CD8-positive, alpha-beta T cell (primary cell): ENCODE measurements at regions of chr10 and their contacts with region 1.

Region 1: GRCh38 chr10:95601116-95601719 is 40.0 kb upstream of the SORBS1 start:
- DNase-seq: peak in 8 of 9 experiments; percentile 13 to 64 (median 33)
- ATAC-seq: no peak
- H3K4me3 ChIP-seq: no peak overlapping the region
- H3K4me3 Mint-ChIP-seq: no peak overlapping the region
- H3K27ac ChIP-seq: no peak overlapping the region
- H3K27ac Mint-ChIP-seq: no peak overlapping the region
- H3K4me1 ChIP-seq: no peaks in the 10 kb centered on the region
- H3K4me1 Mint-ChIP-seq: no peaks in the 10 kb centered on the region
- H3K27me3 ChIP-seq: no peaks in the 10 kb centered on the region
- H3K27me3 Mint-ChIP-seq: no peaks in the 10 kb centered on the region
- CTCF ChIP-seq: peak; percentile 50

Region 2: GRCh38 chr10:94630017-94630688 is 971.1 kb before region 1 on chr10:
- CTCF ChIA-PET with region 1: no interaction called
- POLR2A ChIA-PET with region 1: no interaction called
- intact Hi-C with region 1: loop called in 1 of 2 experiments (anchors 5 kb)
- DNase-seq: peak in 2 of 9 experiments; percentile 3 to 13
- ATAC-seq: no peak
- H3K4me3 ChIP-seq: no peak overlapping the region
- H3K4me3 Mint-ChIP-seq: no peak overlapping the region
- H3K27ac ChIP-seq: no peak overlapping the region
- H3K27ac Mint-ChIP-seq: no peak overlapping the region
- H3K4me1 ChIP-seq: no peaks in the 10 kb centered on the region
- H3K4me1 Mint-ChIP-seq: no peaks in the 10 kb centered on the region
- H3K27me3 ChIP-seq: no peaks in the 10 kb centered on the region
- H3K27me3 Mint-ChIP-seq: no peaks in the 10 kb centered on the region
- CTCF ChIP-seq: peak; percentile 60

Region 3: DNA sequence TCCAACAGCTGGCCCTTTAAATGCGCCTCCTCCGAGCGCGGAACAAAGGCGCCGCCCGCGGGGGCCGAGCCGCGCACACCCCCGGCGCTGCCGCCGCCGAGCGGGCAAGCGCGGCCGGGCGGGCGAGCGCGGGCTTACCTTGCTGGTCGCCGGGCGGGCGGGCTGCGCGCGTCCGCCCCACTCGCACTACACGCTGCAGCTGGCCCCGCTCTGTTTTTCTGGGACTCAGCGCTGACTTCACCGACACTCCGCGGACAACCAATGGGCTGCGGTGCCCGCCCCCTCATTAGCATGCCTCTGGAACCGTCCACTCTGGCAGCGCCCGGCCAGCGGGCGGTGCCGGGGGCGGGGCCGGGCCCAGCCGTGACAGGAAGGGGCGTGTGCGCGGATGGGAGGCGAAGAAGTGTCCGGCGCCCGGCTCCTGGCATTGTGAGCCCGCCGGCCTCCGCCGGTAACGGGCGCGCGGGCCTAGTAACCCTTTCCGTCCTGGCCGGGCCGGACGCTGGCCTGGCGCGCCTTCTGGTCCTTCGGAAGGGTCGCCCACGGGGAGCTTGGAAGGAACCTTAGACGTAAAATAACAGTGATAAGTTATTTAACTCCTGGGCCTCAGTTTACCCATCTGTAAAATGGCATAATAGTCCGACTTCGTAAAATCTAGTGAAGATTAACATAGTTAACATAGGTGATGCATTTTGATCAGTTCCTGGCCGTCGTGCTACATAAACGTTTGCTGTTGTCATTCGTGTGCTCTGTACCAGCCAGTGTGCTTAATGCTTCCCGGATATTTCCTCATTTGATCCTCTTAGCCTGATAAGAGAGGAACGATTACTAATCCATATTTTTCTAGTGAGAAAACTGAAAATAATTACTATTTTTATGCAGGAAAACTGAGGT is 39.8 kb before region 1 on chr10 and contains the start of gene SORBS1:
- CTCF ChIA-PET with region 1: no interaction called
- POLR2A ChIA-PET with region 1: no interaction called
- intact Hi-C with region 1: no loop called
- DNase-seq: peak; percentile 73 to 95 (median 86)
- ATAC-seq: peak; percentile 97
- H3K4me3 ChIP-seq: peak within 1 kb of the TSS; percentile 71 to 99
- H3K4me3 Mint-ChIP-seq: peak within 1 kb of the TSS; percentile 99
- H3K27ac ChIP-seq: peak within 1 kb of the TSS in 1 of 2 experiments; percentile 59
- H3K27ac Mint-ChIP-seq: peak within 1 kb of the TSS; percentile 89
- H3K4me1 ChIP-seq: peaks cover 10% of the 10 kb centered on the region
- H3K4me1 Mint-ChIP-seq: peaks cover 10% of the 10 kb centered on the region
- H3K27me3 ChIP-seq: no peaks in the 10 kb centered on the region
- H3K27me3 Mint-ChIP-seq: peaks cover 10% of the 10 kb centered on the region
- CTCF ChIP-seq: no peak
- total RNA-seq, gene SORBS1: 3.0 to 3.9 TPM

Region 4: DNA sequence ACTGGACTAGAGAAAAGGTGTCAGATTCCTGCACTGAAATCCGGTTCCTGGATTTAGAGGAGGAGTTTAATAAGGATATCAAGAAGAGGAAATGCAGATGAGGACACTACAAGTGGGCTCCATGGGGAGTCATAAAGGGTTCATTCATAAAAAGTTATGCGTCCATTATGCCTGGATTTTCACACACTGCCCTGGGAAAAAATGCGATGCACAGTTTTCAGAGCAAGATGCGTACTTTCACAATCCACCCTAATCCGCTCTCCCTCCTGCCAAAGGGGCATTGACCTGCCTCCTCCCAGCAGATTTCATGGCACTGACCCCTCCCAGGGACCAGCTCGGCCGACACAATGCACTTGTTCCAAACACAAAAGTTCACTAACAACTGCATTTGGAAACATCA is 799.8 kb after region 1 on chr10:
- CTCF ChIA-PET with region 1: no interaction called
- POLR2A ChIA-PET with region 1: no interaction called
- intact Hi-C with region 1: no loop called
- DNase-seq: no peak
- ATAC-seq: no peak
- H3K4me3 ChIP-seq: no peak overlapping the region
- H3K4me3 Mint-ChIP-seq: no peak overlapping the region
- H3K27ac ChIP-seq: no peak overlapping the region
- H3K27ac Mint-ChIP-seq: no peak overlapping the region
- H3K4me1 ChIP-seq: no peaks in the 10 kb centered on the region
- H3K4me1 Mint-ChIP-seq: no peaks in the 10 kb centered on the region
- H3K27me3 ChIP-seq: peaks cover 0 to 3% of the 10 kb centered on the region in 2 experiments
- H3K27me3 Mint-ChIP-seq: peaks cover 15% of the 10 kb centered on the region
- CTCF ChIP-seq: no peak